ENCODE measurements at regions of chr3 and their contacts with region 1.

Region 1: DNA sequence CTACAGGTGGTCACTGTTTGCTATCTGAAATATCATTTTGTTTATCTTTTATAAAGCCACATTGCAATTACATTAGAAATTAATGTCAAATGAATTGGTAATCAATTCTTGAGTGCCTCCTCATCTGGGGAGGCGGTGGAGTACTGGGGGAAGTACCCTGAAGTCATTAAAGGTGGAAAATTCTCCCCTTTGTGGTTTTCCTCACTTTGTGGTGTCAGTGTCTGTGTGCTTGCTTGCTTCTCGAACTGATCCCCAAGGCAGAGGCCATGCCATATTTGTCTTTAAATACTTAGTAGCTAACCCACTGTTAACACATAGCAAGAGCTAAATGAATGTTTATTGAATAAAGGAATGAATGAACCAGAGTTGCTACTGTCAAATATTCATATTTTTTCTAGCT is 40.5 kb upstream of the CCK start:
- DNase-seq: no peak
- H3K4me3 ChIP-seq: no peak overlapping the region
- H3K27ac ChIP-seq: no peak overlapping the region
- H3K4me1 ChIP-seq: peaks cover 8 to 13% (median 10%) of the 10 kb centered on the region in 4 experiments
- H3K27me3 ChIP-seq: peaks cover 0 to 2% (median 0%) of the 10 kb centered on the region in 5 experiments

Region 2: GRCh38 chr3:42214565-42215283 is 91.8 kb before region 1 on chr3:
- CTCF ChIA-PET with region 1: no interaction called
- POLR2A ChIA-PET with region 1: no interaction called
- DNase-seq: no peak
- H3K4me3 ChIP-seq: no peak overlapping the region
- H3K27ac ChIP-seq: no peak overlapping the region
- H3K4me1 ChIP-seq: peaks cover 4 to 14% (median 9%) of the 10 kb centered on the region in 4 experiments
- H3K27me3 ChIP-seq: no peaks in the 10 kb centered on the region

Region 3: DNA sequence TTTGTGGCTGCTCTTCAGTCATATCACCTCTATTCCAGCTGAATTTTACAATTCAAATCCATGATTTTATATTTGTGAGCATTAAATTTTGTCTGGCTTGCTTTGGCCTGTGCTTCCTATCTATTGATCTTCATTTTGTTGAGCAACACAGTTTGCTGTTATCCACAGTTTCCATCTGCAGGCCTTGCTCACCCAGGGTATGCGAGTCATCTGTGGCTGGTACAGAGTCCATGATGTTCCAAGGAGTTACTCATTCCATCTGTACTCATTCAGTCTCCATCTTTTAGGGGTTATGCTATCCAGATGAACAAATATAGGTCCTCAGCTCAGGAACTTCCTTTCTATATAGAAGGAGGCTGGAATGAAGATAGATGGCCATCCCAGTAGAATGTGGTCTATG is 29.6 kb after region 1 on chr3:
- CTCF ChIA-PET with region 1: no interaction called
- POLR2A ChIA-PET with region 1: interaction called, 10 read pairs
- DNase-seq: no peak
- H3K4me3 ChIP-seq: no peak overlapping the region
- H3K27ac ChIP-seq: no peak overlapping the region
- H3K4me1 ChIP-seq: no peaks in the 10 kb centered on the region
- H3K27me3 ChIP-seq: peaks cover 0 to 7% (median under 1%) of the 10 kb centered on the region in 5 experiments